ENCODE measurements at regions of chr1 and their contacts with region 1.

Region 1: DNA sequence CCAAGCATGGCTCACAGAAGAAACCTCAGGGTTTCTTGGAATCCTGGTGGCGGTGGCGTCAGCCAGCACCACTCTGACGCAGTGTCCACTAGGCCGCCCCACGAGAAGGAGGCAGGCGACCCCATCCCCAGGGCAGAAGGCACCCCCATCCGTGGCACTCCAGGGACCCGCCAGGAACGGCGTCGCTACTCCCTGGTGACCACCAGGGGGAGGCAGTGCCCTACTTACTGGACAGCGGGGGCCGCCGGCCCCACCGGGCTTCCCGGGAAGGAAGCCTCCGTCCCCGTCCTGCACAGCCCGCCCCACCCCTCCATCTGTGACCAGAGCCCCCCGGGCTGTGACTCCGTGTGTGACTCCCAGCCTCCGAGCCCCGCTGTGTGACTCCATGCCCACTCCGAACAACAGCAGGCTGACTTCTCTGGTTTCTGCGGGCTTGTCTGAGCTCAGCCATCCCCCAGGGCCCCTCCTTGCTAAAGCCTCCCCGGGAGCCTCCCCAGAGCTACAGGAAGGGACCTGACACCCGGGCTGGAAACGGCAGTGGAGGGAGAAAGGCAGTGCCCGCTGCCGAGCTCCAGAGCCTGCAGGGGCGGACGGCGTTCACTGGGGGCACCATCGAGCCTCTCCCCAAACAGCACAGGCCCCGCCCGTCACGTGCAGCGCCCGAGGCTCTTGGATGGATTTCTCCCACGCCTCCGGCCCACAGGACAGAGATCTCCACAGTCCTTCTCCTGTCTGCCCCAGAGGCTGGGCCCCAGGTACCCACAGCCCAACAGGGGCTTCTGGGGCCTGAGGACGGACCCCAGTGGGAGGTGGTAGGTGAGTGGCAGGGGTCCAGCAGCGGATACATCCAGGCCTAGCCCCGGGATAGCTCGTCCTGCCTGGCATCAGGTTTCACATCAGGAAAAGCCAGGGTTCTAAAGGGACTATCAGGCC is 21.1 kb downstream of the KIF17 start:
- DNase-seq: peak; percentile 89 to 95 (median 94)
- ATAC-seq: peak; percentile 98
- H3K4me3 ChIP-seq: peak overlapping the region; percentile 60
- H3K27ac ChIP-seq: peak overlapping the region; percentile 26; the same call in 2 of the 3 replicates
- H3K4me1 ChIP-seq: peaks cover 3 to 25% of the 10 kb centered on the region in 2 experiments; a peak in 3 of 5 replicates
- H3K27me3 ChIP-seq: peaks cover 4 to 35% of the 10 kb centered on the region in 2 experiments
- CTCF ChIP-seq: peak; percentile 78 to 97 (median 91)
- EP300 ChIP-seq: peak; percentile 37; the same call in 1 of the 2 replicates
- POLR2A ChIP-seq: no peak
- RAD21 ChIP-seq: peak; percentile 89 to 93

Region 2: GRCh38 chr1:20212685-20213331 is 483.9 kb before region 1 on chr1:
- CTCF ChIA-PET with region 1: no interaction called
- POLR2A ChIA-PET with region 1: no interaction called
- in situ Hi-C with region 1: no loop called
- intact Hi-C with region 1: no loop called
- DNase-seq: peak; percentile 75 to 79 (median 77)
- ATAC-seq: peak; percentile 87
- H3K4me3 ChIP-seq: no peak overlapping the region
- H3K27ac ChIP-seq: no peak overlapping the region; the same call in 2 of the 3 replicates
- H3K4me1 ChIP-seq: peaks cover 21 to 23% of the 10 kb centered on the region in 2 experiments
- H3K27me3 ChIP-seq: peaks cover 0 to 14% of the 10 kb centered on the region in 2 experiments; a peak in 3 of 5 replicates
- CTCF ChIP-seq: peak; percentile 86 to 93 (median 90)
- EP300 ChIP-seq: no peak
- POLR2A ChIP-seq: no peak
- RAD21 ChIP-seq: peak; percentile 59 to 64

Region 3: GRCh38 chr1:20551945-20552727 is 144.5 kb before region 1 on chr1 and contains the start of gene FAM43B:
- CTCF ChIA-PET with region 1: no interaction called
- POLR2A ChIA-PET with region 1: no interaction called
- in situ Hi-C with region 1: no loop called
- intact Hi-C with region 1: no loop called
- DNase-seq: peak; percentile 44 to 75 (median 65)
- ATAC-seq: peak; percentile 81
- H3K4me3 ChIP-seq: no peak within 1 kb of the TSS
- H3K27ac ChIP-seq: no peak within 1 kb of the TSS
- H3K4me1 ChIP-seq: peaks cover 6 to 22% of the 10 kb centered on the region in 2 experiments; a peak in 3 of 5 replicates
- H3K27me3 ChIP-seq: peaks cover 52 to 74% of the 10 kb centered on the region in 2 experiments
- CTCF ChIP-seq: no peak
- EP300 ChIP-seq: no peak
- POLR2A ChIP-seq: no peak
- RAD21 ChIP-seq: no peak
- polyA plus RNA-seq, gene FAM43B: not detected

Region 4: DNA sequence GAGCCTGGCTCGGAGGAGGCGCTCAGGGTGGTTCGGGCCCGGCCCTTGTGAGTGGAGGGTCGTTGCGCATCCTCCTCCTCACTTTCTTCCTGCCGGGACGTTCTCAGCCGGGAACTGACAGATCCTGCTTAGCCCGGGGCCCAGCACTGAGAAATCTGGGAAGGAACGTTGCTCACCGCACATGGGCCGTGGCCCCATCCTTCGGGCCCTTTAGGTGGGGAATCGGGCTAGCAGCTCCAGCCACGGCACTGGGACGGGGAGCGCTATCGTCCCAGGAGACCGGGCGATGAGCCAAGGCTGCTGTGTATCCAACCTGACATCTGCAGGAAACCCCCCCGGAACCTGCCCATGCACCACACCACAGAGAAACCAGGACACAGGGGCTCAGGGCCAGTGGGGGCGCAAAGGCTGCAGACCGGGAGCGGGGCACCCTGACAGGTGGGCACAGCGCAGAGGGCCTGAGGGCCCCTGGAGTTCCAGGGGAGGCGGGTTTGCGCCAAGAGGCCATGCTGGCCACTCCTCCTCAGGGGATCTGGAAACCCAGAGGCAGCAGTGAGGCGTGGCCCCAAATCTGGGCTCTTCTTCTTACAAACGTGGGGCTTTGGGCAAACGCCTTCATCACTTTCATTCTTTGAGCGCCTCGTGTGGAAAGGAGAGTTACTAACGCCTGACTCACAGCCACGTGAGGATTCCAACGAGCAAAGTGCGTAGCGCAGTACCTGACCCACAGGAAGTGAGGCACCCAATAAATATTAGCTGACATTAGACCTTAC is 36.1 kb after region 1 on chr1 and contains the start of gene SH2D5:
- CTCF ChIA-PET with region 1: interaction called, 5 read pairs
- POLR2A ChIA-PET with region 1: no interaction called
- in situ Hi-C with region 1: no loop called
- intact Hi-C with region 1: loop called (anchors 2 kb)
- DNase-seq: peak; percentile 60 to 85 (median 67)
- ATAC-seq: peak; percentile 88
- H3K4me3 ChIP-seq: no peak within 1 kb of the TSS
- H3K27ac ChIP-seq: peak within 1 kb of the TSS; percentile 49; the same call in 2 of the 3 replicates
- H3K4me1 ChIP-seq: peaks cover 12 to 32% of the 10 kb centered on the region in 2 experiments
- H3K27me3 ChIP-seq: peaks cover 0 to 26% of the 10 kb centered on the region in 2 experiments; a peak in 3 of 5 replicates
- CTCF ChIP-seq: peak; percentile 52 to 69 (median 68)
- EP300 ChIP-seq: no peak
- POLR2A ChIP-seq: no peak
- RAD21 ChIP-seq: peak; percentile 53 to 55
- polyA plus RNA-seq, gene SH2D5: not detected

Region 5: DNA sequence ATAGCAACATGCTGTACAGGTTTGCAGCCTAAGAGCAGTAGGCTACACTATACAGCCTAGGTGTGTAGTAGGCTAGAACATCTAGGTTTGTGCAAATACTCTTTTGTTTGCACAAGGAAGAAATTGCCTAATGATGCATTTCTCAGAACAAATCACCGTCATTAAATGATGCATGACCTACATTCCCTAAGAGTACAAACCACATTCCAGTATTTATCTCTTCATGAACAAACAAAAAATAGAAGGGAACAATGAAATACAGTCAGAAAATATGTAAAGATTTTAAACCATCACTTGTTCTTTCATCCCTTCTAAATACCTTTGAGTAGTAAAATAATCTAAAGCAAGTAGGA is 200.2 kb after region 1 on chr1:
- CTCF ChIA-PET with region 1: no interaction called
- POLR2A ChIA-PET with region 1: no interaction called
- in situ Hi-C with region 1: no loop called
- intact Hi-C with region 1: loop called (anchors 10 kb)
- DNase-seq: no peak
- ATAC-seq: no peak
- H3K4me3 ChIP-seq: no peak overlapping the region
- H3K27ac ChIP-seq: no peak overlapping the region
- H3K4me1 ChIP-seq: no peaks in the 10 kb centered on the region
- H3K27me3 ChIP-seq: no peaks in the 10 kb centered on the region
- CTCF ChIP-seq: no peak
- EP300 ChIP-seq: no peak
- POLR2A ChIP-seq: no peak
- RAD21 ChIP-seq: no peak

Region 6: GRCh38 chr1:20992322-20993056 is 295.8 kb after region 1 on chr1:
- CTCF ChIA-PET with region 1: no interaction called
- POLR2A ChIA-PET with region 1: no interaction called
- in situ Hi-C with region 1: no loop called
- intact Hi-C with region 1: loop called (anchors 5 kb)
- DNase-seq: no peak
- ATAC-seq: no peak
- H3K4me3 ChIP-seq: no peak overlapping the region
- H3K27ac ChIP-seq: no peak overlapping the region
- H3K4me1 ChIP-seq: no peaks in the 10 kb centered on the region
- H3K27me3 ChIP-seq: no peaks in the 10 kb centered on the region
- CTCF ChIP-seq: no peak
- EP300 ChIP-seq: no peak
- POLR2A ChIP-seq: no peak
- RAD21 ChIP-seq: no peak

Region 7: DNA sequence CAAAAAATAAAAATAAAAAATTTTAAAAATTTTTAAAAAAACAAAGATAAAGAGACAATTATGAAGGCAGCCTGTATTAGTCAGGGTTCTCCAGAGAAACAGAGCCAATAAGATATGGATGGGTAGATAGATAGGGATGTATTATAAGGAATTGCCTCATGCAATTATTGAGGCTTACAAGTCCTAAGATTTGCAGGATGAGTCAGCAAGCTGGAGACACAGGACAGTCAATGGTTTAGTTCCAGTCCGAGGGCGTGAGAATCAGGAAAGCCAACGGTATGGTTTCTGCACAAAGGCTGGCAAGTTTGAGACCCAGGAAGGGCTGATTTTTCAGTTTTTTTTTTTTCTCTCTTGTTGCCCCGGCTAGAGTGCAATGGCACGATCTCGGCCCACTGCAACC is 504.1 kb after region 1 on chr1:
- CTCF ChIA-PET with region 1: interaction called, 33 read pairs
- POLR2A ChIA-PET with region 1: interaction called, 3 read pairs
- in situ Hi-C with region 1: loop called (anchors 5 kb)
- intact Hi-C with region 1: loop called (anchors 2 kb)
- DNase-seq: peak in 1 of 4 experiments; percentile 46
- ATAC-seq: peak; percentile 71
- H3K4me3 ChIP-seq: no peak overlapping the region
- H3K27ac ChIP-seq: no peak overlapping the region
- H3K4me1 ChIP-seq: no peaks in the 10 kb centered on the region; a peak in 1 of 5 replicates
- H3K27me3 ChIP-seq: peaks cover 4 to 12% of the 10 kb centered on the region in 2 experiments; a peak in 3 of 5 replicates
- CTCF ChIP-seq: no peak
- EP300 ChIP-seq: no peak
- POLR2A ChIP-seq: no peak
- RAD21 ChIP-seq: no peak

Region 8: GRCh38 chr1:21206117-21206516 is 509.5 kb after region 1 on chr1:
- CTCF ChIA-PET with region 1: no interaction called
- POLR2A ChIA-PET with region 1: no interaction called
- in situ Hi-C with region 1: loop called (anchors 5 kb)
- intact Hi-C with region 1: no loop called
- DNase-seq: no peak
- ATAC-seq: no peak
- H3K4me3 ChIP-seq: no peak overlapping the region
- H3K27ac ChIP-seq: no peak overlapping the region
- H3K4me1 ChIP-seq: no peaks in the 10 kb centered on the region
- H3K27me3 ChIP-seq: peaks cover 10 to 12% of the 10 kb centered on the region in 2 experiments; a peak in 2 of 5 replicates
- CTCF ChIP-seq: no peak
- EP300 ChIP-seq: no peak
- POLR2A ChIP-seq: no peak
- RAD21 ChIP-seq: no peak

Measured in K562 (cell line).